PC-9 (cell line): ENCODE measurements at regions of chr7 and their contacts with region 1.

Region 1: DNA sequence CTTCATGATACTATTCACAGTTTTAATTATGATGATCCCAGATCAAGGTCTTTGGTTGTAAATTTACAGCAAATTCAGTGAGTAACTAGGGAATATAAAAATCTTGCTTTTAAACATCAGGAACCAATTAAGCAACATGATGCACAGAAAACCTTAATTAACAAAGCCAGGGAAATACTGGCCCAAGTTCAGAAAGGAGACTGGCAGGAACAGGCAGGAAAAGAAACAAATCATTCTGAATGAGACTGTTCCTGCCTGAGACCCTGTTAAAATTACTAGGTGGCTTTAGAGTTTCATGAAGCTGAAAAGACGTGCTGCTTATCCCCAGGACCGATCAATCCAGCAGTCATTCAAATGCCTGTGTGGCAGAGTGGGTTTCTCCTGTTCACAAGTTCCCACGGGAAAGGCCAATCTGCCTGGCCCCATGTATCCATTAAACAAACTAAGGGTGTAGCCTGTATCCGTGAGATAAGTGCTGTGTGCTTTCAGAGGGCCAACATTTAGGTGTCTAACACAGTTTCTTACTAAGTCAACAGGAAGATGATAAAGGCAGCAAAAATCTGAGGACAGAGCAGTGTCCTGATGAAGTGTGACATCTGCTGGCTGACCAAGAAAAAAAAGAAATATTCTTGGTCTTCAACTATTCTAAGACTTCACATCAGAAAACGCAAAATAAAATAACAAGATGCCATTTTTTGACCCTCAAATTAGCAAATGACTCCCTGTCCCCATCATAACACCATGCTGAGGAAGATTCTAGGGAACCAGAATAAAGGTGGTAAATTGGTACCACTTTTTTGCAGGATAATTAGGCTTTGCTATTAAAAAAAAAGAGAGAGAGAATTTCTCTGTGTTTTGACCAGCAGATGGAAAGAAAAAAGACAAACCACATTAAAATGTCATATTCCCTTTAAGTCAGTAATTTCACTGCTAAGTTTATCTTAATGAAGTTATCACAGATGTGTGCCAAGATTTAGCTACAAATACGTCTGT is 34.2 kb downstream of the PUS7 start:
- DNase-seq: peak in 1 of 2 experiments; percentile 6
- H3K4me3 ChIP-seq: no peak overlapping the region
- H3K27ac ChIP-seq: no peak overlapping the region; the same call in 1 of the 2 replicates
- H3K4me1 ChIP-seq: no peaks in the 10 kb centered on the region
- H3K27me3 ChIP-seq: no peaks in the 10 kb centered on the region
- CTCF ChIP-seq: peak; percentile 46; the same call in 1 of the 2 replicates

Region 2: DNA sequence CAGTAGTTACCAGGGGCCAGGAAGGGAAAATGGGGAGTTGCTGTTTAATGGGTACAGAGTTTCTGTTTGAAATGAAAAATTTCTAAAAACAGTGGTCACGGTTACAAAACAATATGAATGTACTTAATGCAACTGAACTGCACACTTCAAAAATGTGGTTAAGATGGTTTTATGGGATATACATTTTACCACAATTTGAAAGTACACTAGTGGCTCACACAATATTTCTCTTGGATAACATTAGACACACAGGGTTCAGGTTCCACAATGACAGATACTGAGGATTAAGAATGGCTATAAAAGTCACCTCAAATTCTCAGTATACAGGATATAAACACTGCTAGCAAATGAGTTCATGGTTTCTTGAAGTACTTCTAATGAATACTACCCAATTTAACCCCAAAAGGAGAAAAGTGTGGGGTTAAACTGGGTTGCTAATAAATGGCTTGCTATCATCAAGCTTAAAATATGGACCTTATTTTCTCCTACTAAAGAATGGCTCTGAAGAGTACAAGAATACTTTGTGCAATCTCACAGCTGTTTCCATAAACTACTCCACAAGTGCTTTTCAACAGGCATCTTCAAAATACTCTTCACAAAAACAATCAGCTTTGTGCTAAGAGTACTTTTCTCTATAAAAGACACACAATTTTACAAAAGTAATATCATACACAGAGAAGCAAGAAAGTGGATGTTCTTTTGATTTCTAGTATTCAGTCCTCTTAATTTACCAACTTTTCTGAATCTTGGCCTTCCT is 192.1 kb before region 1 on chr7:
- CTCF ChIA-PET with region 1: no interaction called
- POLR2A ChIA-PET with region 1: no interaction called
- intact Hi-C with region 1: no loop called
- DNase-seq: no peak
- H3K4me3 ChIP-seq: no peak overlapping the region
- H3K27ac ChIP-seq: no peak overlapping the region
- H3K4me1 ChIP-seq: no peaks in the 10 kb centered on the region
- H3K27me3 ChIP-seq: no peaks in the 10 kb centered on the region
- CTCF ChIP-seq: no peak

Region 3: GRCh38 chr7:105336009-105336408 is 151.9 kb before region 1 on chr7:
- CTCF ChIA-PET with region 1: no interaction called
- POLR2A ChIA-PET with region 1: no interaction called
- intact Hi-C with region 1: no loop called
- DNase-seq: no peak
- H3K4me3 ChIP-seq: no peak overlapping the region
- H3K27ac ChIP-seq: no peak overlapping the region
- H3K4me1 ChIP-seq: no peaks in the 10 kb centered on the region
- H3K27me3 ChIP-seq: no peaks in the 10 kb centered on the region
- CTCF ChIP-seq: peak; percentile 71

Region 4: DNA sequence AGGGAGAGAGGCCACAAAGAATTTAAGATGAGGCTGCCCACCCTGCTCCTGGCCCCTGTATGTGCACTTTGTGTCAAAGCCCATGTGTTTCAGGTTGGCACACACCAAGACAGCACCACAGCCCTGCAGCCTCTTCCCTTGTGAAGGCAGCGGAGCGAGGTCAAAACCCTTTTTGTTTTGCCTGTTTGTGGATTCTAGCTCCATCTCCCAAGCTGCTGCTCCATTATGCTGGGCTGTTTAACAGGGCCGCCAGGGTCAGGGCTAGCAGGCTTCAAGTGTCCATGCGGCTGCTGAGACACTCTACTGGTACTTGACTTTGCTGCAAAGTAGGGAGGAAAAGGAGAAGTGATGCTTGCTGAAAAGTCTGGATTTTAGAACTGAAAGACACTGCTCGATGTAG is 235.7 kb after region 1 on chr7:
- CTCF ChIA-PET with region 1: interaction called, 10 read pairs
- POLR2A ChIA-PET with region 1: no interaction called
- intact Hi-C with region 1: no loop called
- DNase-seq: no peak
- H3K4me3 ChIP-seq: no peak overlapping the region
- H3K27ac ChIP-seq: no peak overlapping the region
- H3K4me1 ChIP-seq: peaks cover 17% of the 10 kb centered on the region
- H3K27me3 ChIP-seq: no peaks in the 10 kb centered on the region
- CTCF ChIP-seq: no peak